Naive thymus-derived CD4-positive, alpha-beta T cell (primary cell): ENCODE measurements at regions of chr16 and their contacts with region 1.

Region 1: GRCh38 chr16:80580109-80580832 is 39.5 kb downstream of the DYNLRB2 start:
- DNase-seq: peak; percentile 11 to 68 (median 59)
- ATAC-seq: peak; percentile 91
- H3K4me3 ChIP-seq: peak overlapping the region; percentile 29
- H3K4me3 Mint-ChIP-seq: peak overlapping the region; percentile 4 to 83 (median 54)
- H3K27ac ChIP-seq: peak overlapping the region; percentile 57
- H3K27ac Mint-ChIP-seq: peak overlapping the region; percentile 78 to 99 (median 93)
- H3K4me1 ChIP-seq: peaks cover 31 to 36% of the 10 kb centered on the region in 2 donors
- H3K4me1 Mint-ChIP-seq: peaks cover 18 to 64% (median 40%) of the 10 kb centered on the region in 7 donors
- H3K27me3 ChIP-seq: no peaks in the 10 kb centered on the region
- H3K27me3 Mint-ChIP-seq: peaks cover 0 to 1% (median 0%) of the 10 kb centered on the region in 5 donors

Region 2: GRCh38 chr16:79278506-79278905 is 1301.8 kb before region 1 on chr16:
- CTCF ChIA-PET with region 1: no interaction called
- POLR2A ChIA-PET with region 1: no interaction called
- intact Hi-C with region 1: loop called in 1 of 2 experiments (anchors 10 kb)
- DNase-seq: peak in 8 of 9 donors; percentile 14 to 64 (median 44)
- ATAC-seq: peak; percentile 85
- H3K4me3 ChIP-seq: peak overlapping the region; percentile 22
- H3K4me3 Mint-ChIP-seq: peak overlapping the region; percentile 5 to 74 (median 55)
- H3K27ac ChIP-seq: no peak overlapping the region
- H3K27ac Mint-ChIP-seq: peak overlapping the region in 8 of 9 donors; percentile 10 to 91 (median 63)
- H3K4me1 ChIP-seq: peaks cover 16 to 53% of the 10 kb centered on the region in 2 donors
- H3K4me1 Mint-ChIP-seq: peaks cover 16 to 83% (median 34%) of the 10 kb centered on the region in 7 donors
- H3K27me3 ChIP-seq: no peaks in the 10 kb centered on the region
- H3K27me3 Mint-ChIP-seq: peaks cover 0 to 26% (median 4%) of the 10 kb centered on the region in 5 donors

Region 3: DNA sequence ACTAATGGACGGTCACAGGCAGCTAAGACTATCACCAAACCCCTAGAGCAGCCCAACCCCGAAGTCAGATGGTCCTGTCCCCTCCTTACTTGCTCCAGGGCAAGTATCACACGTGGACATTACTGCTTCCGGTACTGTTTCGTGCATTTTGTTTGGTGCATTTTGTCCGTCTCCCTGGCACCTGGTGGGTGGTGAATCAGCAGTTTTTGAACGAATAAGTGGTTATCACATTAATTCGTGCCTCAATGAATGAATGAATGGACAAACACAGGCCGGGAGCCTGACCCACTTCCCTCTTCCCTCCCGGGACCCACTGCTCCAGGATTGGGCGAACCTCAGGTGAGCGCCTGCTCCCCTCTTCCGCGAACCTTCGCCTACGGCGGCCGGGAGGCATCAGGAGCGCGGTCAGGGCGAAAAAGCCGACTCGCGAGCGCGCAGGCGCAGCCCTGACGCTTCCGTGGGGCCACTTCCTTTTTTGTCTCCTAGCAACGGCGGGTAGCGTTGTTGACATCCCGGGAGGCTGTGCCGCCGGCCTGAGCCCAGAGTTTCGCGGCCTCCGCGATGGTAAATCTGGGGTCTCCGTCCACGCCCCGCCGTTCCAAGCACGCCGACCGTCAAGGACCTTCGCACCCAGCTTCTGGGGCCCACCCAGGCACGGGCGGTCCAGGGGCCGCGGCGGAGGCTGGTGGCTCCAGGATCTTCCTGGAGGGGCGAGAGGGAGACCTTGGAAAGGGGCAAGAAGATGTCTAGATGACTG is 39.6 kb before region 1 on chr16 and contains the start of gene DYNLRB2:
- CTCF ChIA-PET with region 1: no interaction called
- POLR2A ChIA-PET with region 1: interaction called, 5 read pairs
- intact Hi-C with region 1: loop called (anchors 1 kb)
- DNase-seq: peak; percentile 82 to 94 (median 93)
- ATAC-seq: peak; percentile 94
- H3K4me3 ChIP-seq: peak within 1 kb of the TSS; percentile 94
- H3K4me3 Mint-ChIP-seq: peak within 1 kb of the TSS; percentile 93 to 98 (median 96)
- H3K27ac ChIP-seq: peak within 1 kb of the TSS; percentile 77
- H3K27ac Mint-ChIP-seq: peak within 1 kb of the TSS; percentile 96 to 99 (median 97)
- H3K4me1 ChIP-seq: peaks cover 6 to 13% of the 10 kb centered on the region in 2 donors
- H3K4me1 Mint-ChIP-seq: peaks cover 16 to 33% (median 19%) of the 10 kb centered on the region in 7 donors
- H3K27me3 ChIP-seq: no peaks in the 10 kb centered on the region
- H3K27me3 Mint-ChIP-seq: peaks cover 0 to 9% (median 3%) of the 10 kb centered on the region in 5 donors
- total RNA-seq, gene DYNLRB2: 0.92 to 1.2 TPM in 2 of 5 experiments, not detected in the others

Region 4: GRCh38 chr16:80569440-80570105 is 10.7 kb before region 1 on chr16:
- CTCF ChIA-PET with region 1: interaction called, 3 read pairs
- POLR2A ChIA-PET with region 1: interaction called, 10 read pairs
- intact Hi-C with region 1: loop called (anchors 1 kb)
- DNase-seq: peak in 2 of 9 donors; percentile 24 to 74
- ATAC-seq: peak; percentile 78
- H3K4me3 ChIP-seq: no peak overlapping the region
- H3K4me3 Mint-ChIP-seq: peak overlapping the region in 4 of 10 donors; percentile 2 to 65 (median 12)
- H3K27ac ChIP-seq: no peak overlapping the region
- H3K27ac Mint-ChIP-seq: peak overlapping the region in 5 of 9 donors; percentile 3 to 86 (median 38)
- H3K4me1 ChIP-seq: peaks cover 5 to 19% of the 10 kb centered on the region in 2 donors
- H3K4me1 Mint-ChIP-seq: peaks cover 16 to 51% (median 28%) of the 10 kb centered on the region in 7 donors
- H3K27me3 ChIP-seq: no peaks in the 10 kb centered on the region
- H3K27me3 Mint-ChIP-seq: peaks cover 0 to 9% (median 0%) of the 10 kb centered on the region in 5 donors

Region 5: GRCh38 chr16:80656711-80657150 is 76.5 kb after region 1 on chr16:
- CTCF ChIA-PET with region 1: no interaction called
- POLR2A ChIA-PET with region 1: no interaction called
- intact Hi-C with region 1: loop called (anchors 1 to 2 kb)
- DNase-seq: peak in 8 of 9 donors; percentile 25 to 60 (median 48)
- ATAC-seq: peak; percentile 85
- H3K4me3 ChIP-seq: peak overlapping the region; percentile 56
- H3K4me3 Mint-ChIP-seq: peak overlapping the region; percentile 71 to 92 (median 87)
- H3K27ac ChIP-seq: peak overlapping the region; percentile 68
- H3K27ac Mint-ChIP-seq: peak overlapping the region; percentile 80 to 97 (median 91)
- H3K4me1 ChIP-seq: peaks cover 6 to 14% of the 10 kb centered on the region in 2 donors
- H3K4me1 Mint-ChIP-seq: peaks cover 18 to 47% (median 28%) of the 10 kb centered on the region in 7 donors
- H3K27me3 ChIP-seq: no peaks in the 10 kb centered on the region
- H3K27me3 Mint-ChIP-seq: no peaks in the 10 kb centered on the region

Region 6: GRCh38 chr16:80804056-80804450 is 223.8 kb after region 1 on chr16:
- CTCF ChIA-PET with region 1: no interaction called
- POLR2A ChIA-PET with region 1: interaction called, 4 read pairs
- intact Hi-C with region 1: loop called (anchors 1 to 5 kb)
- DNase-seq: peak; percentile 26 to 69 (median 52)
- ATAC-seq: peak; percentile 69
- H3K4me3 ChIP-seq: no peak overlapping the region
- H3K4me3 Mint-ChIP-seq: peak overlapping the region; percentile 85 to 96 (median 94)
- H3K27ac ChIP-seq: no peak overlapping the region
- H3K27ac Mint-ChIP-seq: peak overlapping the region in 7 of 9 donors; percentile 46 to 98 (median 78)
- H3K4me1 ChIP-seq: peaks cover 0 to 10% of the 10 kb centered on the region in 2 donors
- H3K4me1 Mint-ChIP-seq: peaks cover 12 to 59% (median 18%) of the 10 kb centered on the region in 7 donors
- H3K27me3 ChIP-seq: no peaks in the 10 kb centered on the region
- H3K27me3 Mint-ChIP-seq: peaks cover 0 to 9% (median 0%) of the 10 kb centered on the region in 5 donors